CD4-positive, alpha-beta memory T cell (primary cell): ENCODE measurements at regions of chr16 and their contacts with region 1.

Region 1: GRCh38 chr16:57413301-57413730 is 8.7 kb downstream of the CCL17 start:
- DNase-seq: no peak
- H3K4me3 ChIP-seq: no peak overlapping the region
- H3K4me3 Mint-ChIP-seq: no peak overlapping the region
- H3K27ac ChIP-seq: no peak overlapping the region
- H3K27ac Mint-ChIP-seq: no peak overlapping the region
- H3K4me1 ChIP-seq: peaks cover 7% of the 10 kb centered on the region
- H3K4me1 Mint-ChIP-seq: peaks cover 6 to 13% (median 7%) of the 10 kb centered on the region in 4 donors
- H3K27me3 ChIP-seq: no peaks in the 10 kb centered on the region
- H3K27me3 Mint-ChIP-seq: peaks cover 1 to 6% of the 10 kb centered on the region in 2 donors

Region 2: DNA sequence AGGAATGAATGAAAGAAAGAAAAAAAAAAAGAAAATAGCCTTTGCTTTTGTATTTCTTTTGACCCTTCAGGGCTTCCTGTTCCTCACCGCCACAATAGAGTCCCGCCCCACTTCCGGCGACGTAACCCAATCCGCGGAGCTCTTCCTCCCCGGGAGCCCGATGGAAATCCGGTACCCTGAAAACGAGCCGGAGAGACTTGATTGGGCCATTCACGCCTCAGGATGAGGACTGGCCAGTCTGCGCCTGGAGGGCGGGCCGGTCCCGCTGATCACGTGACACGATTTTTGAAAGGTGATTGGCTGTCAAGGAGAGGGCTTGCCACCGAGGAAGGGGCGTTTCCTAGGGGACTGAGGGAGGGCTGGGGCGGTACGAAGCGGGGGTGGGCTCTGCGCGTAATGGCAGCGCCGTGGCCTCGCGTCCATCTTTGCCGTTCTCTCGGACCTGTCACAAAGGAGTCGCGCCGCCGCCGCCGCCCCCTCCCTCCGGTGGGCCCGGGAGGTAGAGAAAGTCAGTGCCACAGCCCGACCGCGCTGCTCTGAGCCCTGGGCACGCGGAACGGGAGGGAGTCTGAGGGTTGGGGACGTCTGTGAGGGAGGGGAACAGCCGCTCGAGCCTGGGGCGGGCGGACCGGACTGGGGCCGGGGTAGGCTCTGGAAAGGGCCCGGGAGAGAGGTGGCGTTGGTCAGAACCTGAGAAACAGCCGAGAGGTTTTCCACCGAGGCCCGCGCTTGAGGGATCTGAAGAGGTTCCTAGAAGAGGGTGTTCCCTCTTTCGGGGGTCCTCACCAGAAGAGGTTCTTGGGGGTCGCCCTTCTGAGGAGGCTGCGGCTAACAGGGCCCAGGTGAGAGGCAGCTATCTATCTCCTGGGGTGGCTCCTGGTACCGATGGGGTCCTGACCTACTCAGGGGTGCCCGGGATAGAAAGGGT is 227.1 kb before region 1 on chr16 and contains the starts of genes PSME3IP1 and RSPRY1:
- CTCF ChIA-PET with region 1: interaction called, 4 read pairs
- POLR2A ChIA-PET with region 1: no interaction called
- intact Hi-C with region 1: loop called (anchors 5 kb)
- DNase-seq: peak; percentile 99 to 100 (median 100)
- H3K4me3 ChIP-seq: peak within 1 kb of the TSS; percentile 88
- H3K4me3 Mint-ChIP-seq: peak within 1 kb of the TSS; percentile 97 to 99 (median 99)
- H3K27ac ChIP-seq: peak within 1 kb of the TSS; percentile 87
- H3K27ac Mint-ChIP-seq: peak within 1 kb of the TSS; percentile 95 to 99 (median 97)
- H3K4me1 ChIP-seq: peaks cover 45% of the 10 kb centered on the region
- H3K4me1 Mint-ChIP-seq: peaks cover 36 to 60% (median 48%) of the 10 kb centered on the region in 4 donors
- H3K27me3 ChIP-seq: no peaks in the 10 kb centered on the region
- H3K27me3 Mint-ChIP-seq: no peaks in the 10 kb centered on the region
- total RNA-seq, gene PSME3IP1: 147 to 157 TPM
- total RNA-seq, gene RSPRY1: 32.8 to 38.0 TPM

Region 3: DNA sequence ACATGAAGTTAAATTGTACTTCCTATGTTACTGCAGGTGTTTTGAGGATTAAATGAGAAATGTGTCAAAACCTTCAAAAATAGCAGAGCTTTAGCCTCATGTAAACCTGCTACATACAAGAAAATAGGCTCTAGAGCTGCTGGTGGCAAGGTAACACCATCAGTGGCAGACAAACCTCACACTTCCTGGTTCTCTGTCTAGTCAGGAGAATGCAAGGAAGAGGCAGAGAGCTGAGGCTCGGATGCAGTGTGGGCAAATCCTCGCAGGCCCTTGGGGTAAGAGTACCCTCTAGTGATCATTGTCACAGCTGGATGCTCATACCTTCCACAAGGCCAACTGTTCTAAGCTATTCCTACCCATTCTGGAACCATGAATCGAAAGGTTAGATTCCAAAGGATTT is 19.7 kb after region 1 on chr16:
- CTCF ChIA-PET with region 1: interaction called, 22 read pairs
- POLR2A ChIA-PET with region 1: no interaction called
- intact Hi-C with region 1: no loop called
- DNase-seq: no peak
- H3K4me3 ChIP-seq: no peak overlapping the region
- H3K4me3 Mint-ChIP-seq: no peak overlapping the region
- H3K27ac ChIP-seq: no peak overlapping the region
- H3K27ac Mint-ChIP-seq: peak overlapping the region in 2 of 7 donors; percentile 64 to 75
- H3K4me1 ChIP-seq: no peaks in the 10 kb centered on the region
- H3K4me1 Mint-ChIP-seq: peaks cover 0 to 3% (median 1%) of the 10 kb centered on the region in 4 donors
- H3K27me3 ChIP-seq: no peaks in the 10 kb centered on the region
- H3K27me3 Mint-ChIP-seq: no peaks in the 10 kb centered on the region

Region 4: DNA sequence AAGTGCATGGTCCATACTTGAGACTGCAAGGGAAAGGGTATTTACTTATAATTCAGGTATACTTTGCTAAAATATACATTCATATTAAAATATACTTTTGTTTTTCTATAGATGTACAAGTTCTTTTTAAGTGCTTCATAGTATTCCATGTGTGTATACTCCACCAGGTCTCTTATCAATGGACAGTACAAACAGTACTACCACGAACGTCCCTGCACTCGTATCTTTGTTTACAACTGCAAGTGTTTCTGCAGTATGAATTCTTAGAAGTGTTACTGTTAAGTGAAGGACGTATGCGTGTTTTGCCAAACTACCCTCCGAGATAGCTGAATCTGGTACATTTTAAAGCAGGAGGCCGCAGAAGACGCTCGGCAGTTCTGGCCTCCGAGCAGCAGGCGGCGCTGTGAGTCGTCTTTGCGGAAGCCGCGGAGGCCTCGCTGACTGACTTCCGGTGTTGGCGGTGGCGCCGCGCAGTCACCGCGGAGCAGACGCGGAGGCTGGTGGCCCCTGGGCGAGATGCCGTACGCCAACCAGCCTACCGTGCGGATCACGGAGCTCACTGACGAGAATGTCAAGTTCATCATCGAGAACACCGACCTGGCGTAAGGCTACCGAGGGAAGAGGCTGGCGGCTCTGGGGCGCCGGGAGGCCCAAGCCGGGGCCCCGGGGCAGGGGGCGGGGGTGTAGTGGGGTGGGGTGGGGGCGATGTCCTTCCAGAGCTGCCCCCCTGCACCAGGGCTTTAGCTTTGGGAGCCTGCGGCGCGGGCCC is 49.1 kb after region 1 on chr16 and contains the start of gene POLR2C:
- CTCF ChIA-PET with region 1: interaction called, 4 read pairs
- POLR2A ChIA-PET with region 1: interaction called, 10 read pairs
- intact Hi-C with region 1: no loop called
- DNase-seq: peak; percentile 89 to 93 (median 90)
- H3K4me3 ChIP-seq: peak within 1 kb of the TSS; percentile 81 to 87
- H3K4me3 Mint-ChIP-seq: peak within 1 kb of the TSS; percentile 98 to 100 (median 100)
- H3K27ac ChIP-seq: peak within 1 kb of the TSS; percentile 69
- H3K27ac Mint-ChIP-seq: peak within 1 kb of the TSS; percentile 96 to 100 (median 99)
- H3K4me1 ChIP-seq: peaks cover 36% of the 10 kb centered on the region
- H3K4me1 Mint-ChIP-seq: peaks cover 16 to 43% (median 34%) of the 10 kb centered on the region in 4 donors
- H3K27me3 ChIP-seq: no peaks in the 10 kb centered on the region
- H3K27me3 Mint-ChIP-seq: no peaks in the 10 kb centered on the region
- total RNA-seq, gene POLR2C: 71.4 to 78.1 TPM

Region 5: DNA sequence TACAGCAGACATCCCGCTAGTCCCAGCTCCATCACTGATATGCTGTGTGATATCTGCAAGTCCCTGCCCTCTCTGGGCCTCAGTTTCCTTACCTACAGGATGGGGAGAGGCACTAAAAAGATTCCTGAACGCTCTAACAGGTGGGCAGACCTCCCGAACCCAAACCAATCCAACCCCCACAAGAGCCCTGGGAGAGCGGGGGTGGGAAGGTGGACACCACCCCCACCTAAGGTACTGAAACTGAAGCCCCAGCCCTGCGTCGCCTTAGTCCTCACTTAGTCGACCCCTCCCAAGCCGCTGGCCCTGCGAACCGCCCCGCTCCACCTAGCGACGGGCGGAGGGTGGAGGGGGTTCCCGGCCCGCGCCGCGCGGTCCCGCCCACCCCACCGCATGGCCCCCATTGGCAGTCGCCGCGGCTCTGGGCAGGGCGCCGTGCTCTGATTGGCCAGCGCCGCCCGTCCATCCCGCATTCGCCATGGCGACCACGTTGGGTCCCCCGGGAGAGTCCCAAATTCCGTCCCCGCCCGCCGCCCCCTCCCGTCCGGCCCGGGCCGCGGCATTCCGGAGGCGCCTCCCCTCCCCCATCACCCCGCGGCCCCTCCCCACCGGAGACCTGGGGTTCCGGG is 122.5 kb after region 1 on chr16:
- CTCF ChIA-PET with region 1: interaction called, 4 read pairs
- POLR2A ChIA-PET with region 1: no interaction called
- intact Hi-C with region 1: loop called (anchors 5 kb)
- DNase-seq: peak; percentile 89 to 95 (median 93)
- H3K4me3 ChIP-seq: peak overlapping the region in 1 of 2 donors; percentile 51
- H3K4me3 Mint-ChIP-seq: peak overlapping the region; percentile 80 to 91 (median 83)
- H3K27ac ChIP-seq: peak overlapping the region; percentile 92
- H3K27ac Mint-ChIP-seq: peak overlapping the region; percentile 96 to 99 (median 98)
- H3K4me1 ChIP-seq: peaks cover 76% of the 10 kb centered on the region
- H3K4me1 Mint-ChIP-seq: peaks cover 60 to 76% (median 69%) of the 10 kb centered on the region in 4 donors
- H3K27me3 ChIP-seq: no peaks in the 10 kb centered on the region
- H3K27me3 Mint-ChIP-seq: no peaks in the 10 kb centered on the region